ENCODE measurements at regions of chr14 and their contacts with region 1.

Region 1: GRCh38 chr14:104768437-104769323 is 15.7 kb downstream of the SIVA1 start:
- DNase-seq: peak; percentile 94
- H3K4me3 ChIP-seq: no peak overlapping the region
- H3K27ac ChIP-seq: peak overlapping the region; percentile 12 to 55 (median 48)
- H3K4me1 ChIP-seq: peaks cover 0 to 10% (median 9%) of the 10 kb centered on the region in 4 donors
- H3K27me3 ChIP-seq: no peaks in the 10 kb centered on the region
- CTCF ChIP-seq: peak; percentile 75 to 91 (median 80)
- EP300 ChIP-seq: no peak
- POLR2A ChIP-seq: no peak

Region 2: DNA sequence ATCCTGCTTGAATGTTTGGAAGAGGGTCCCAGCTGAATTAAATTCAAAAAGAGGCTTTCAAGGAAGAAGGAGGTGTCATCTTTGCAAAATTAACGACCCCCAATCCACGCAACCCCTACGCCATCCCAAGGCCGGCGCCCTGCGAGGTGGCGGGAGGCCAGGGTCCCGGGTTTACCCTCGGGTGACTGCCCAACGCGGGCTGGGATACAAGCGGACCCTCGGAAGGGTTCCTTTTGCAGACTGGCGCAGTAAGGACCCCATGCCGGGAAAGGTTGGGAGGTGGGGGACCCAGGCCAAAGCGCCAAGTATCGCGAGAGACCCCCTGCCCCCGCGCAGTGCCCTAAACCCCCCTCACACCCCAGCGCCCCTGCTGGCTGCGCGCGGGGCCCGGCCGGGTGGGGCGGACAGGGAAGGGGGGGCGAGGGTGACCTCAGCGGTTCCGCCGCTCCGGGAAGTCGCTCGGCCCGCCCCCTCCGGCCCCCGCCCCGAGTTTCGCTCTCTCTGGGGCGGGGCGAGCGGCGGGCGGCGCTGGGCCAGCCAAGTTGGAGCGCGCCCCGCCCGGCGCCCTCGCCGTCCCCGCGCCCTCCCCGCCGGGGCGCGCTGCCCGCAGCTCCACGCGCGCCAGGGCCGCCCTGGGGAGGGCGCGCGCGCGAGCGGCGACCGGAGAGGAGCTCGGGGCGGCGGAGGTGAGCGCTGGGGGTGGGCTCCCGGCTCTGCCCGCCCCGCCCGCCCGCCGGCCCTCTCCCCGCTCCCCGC is 31.5 kb after region 1 on chr14:
- intact Hi-C with region 1: no loop called
- DNase-seq: peak; percentile 94
- H3K4me3 ChIP-seq: peak overlapping the region; percentile 43 to 69 (median 56)
- H3K27ac ChIP-seq: peak overlapping the region; percentile 97 to 100 (median 98)
- H3K4me1 ChIP-seq: peaks cover 0 to 59% (median 47%) of the 10 kb centered on the region in 4 donors
- H3K27me3 ChIP-seq: no peaks in the 10 kb centered on the region
- CTCF ChIP-seq: peak; percentile 24 to 48 (median 42)
- EP300 ChIP-seq: no peak
- POLR2A ChIP-seq: peak; percentile 25 to 56

Region 3: GRCh38 chr14:104820669-104821228 is 52.1 kb after region 1 on chr14:
- intact Hi-C with region 1: loop called (anchors 1 kb)
- DNase-seq: peak; percentile 79
- H3K4me3 ChIP-seq: no peak overlapping the region
- H3K27ac ChIP-seq: no peak overlapping the region
- H3K4me1 ChIP-seq: peaks cover 0 to 33% (median 30%) of the 10 kb centered on the region in 4 donors
- H3K27me3 ChIP-seq: peaks cover 0 to 5% (median 0%) of the 10 kb centered on the region in 3 donors
- CTCF ChIP-seq: peak in 3 of 4 experiments; percentile 12 to 52 (median 50)
- EP300 ChIP-seq: no peak
- POLR2A ChIP-seq: no peak

Region 4: DNA sequence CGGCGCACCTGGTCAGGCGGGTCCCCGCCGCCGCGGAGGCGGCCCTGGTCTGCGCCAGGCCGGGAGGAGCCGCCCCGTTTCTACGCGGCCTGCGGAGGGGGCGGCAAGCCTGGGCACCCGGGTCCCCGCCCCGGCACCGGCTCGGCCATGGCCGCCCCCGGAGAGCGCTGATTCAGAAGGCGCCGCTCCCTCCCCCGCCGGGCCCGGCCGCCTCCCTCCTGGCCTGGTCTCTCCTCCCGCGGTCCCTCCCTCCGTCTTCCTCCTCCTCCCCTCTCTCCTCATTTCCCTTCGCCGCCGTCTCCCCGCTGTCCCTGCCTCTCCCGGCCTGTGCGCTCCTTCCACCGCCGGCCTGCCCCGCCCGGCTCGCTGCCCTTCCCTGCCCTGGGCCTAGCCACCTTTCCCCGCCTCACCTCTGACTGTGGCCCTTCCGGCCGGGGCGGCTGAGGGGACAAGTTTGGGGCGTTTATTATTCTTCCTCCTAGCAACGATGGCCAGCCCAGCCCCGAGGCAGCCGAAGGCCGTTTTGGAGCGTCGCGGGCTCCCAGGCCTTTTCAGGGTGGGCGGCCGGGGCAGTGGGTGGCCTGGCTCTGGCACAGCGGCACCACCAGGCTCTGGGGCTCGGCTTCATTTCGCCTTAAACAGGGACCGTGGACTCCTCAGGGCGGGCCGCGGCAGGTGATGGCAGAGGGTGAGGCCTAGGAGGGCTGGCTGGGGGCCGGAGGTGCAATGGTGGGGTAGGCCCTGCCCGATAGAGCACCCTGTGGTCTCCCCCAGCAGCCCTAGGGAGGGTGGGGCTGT is 97.2 kb after region 1 on chr14:
- intact Hi-C with region 1: loop called (anchors 5 kb)
- DNase-seq: peak; percentile 85
- H3K4me3 ChIP-seq: peak overlapping the region; percentile 57 to 89 (median 71)
- H3K27ac ChIP-seq: peak overlapping the region; percentile 67 to 80 (median 75)
- H3K4me1 ChIP-seq: peaks cover 0 to 35% (median 26%) of the 10 kb centered on the region in 4 donors
- H3K27me3 ChIP-seq: peaks cover 0 to 9% (median 0%) of the 10 kb centered on the region in 3 donors
- CTCF ChIP-seq: no peak
- EP300 ChIP-seq: no peak
- POLR2A ChIP-seq: peak in 1 of 2 donors; percentile 24

Measured in sigmoid colon (tissue), 7 donors.